ENCODE measurements at regions of chr12 and their contacts with region 1.

Region 1: GRCh38 chr12:123928274-123928865 is 44.3 kb downstream of the CCDC92 start:
- DNase-seq: no peak
- ATAC-seq: no peak
- H3K4me3 Mint-ChIP-seq: no peak overlapping the region
- H3K27ac Mint-ChIP-seq: no peak overlapping the region
- H3K4me1 Mint-ChIP-seq: peaks cover 13% of the 10 kb centered on the region
- H3K27me3 Mint-ChIP-seq: peaks cover 3% of the 10 kb centered on the region
- CTCF ChIP-seq: no peak

Region 2: GRCh38 chr12:123608182-123608581 is 320.2 kb before region 1 on chr12:
- CTCF ChIA-PET with region 1: no interaction called
- POLR2A ChIA-PET with region 1: no interaction called
- intact Hi-C with region 1: no loop called
- DNase-seq: no peak
- ATAC-seq: no peak
- H3K4me3 Mint-ChIP-seq: no peak overlapping the region
- H3K27ac Mint-ChIP-seq: no peak overlapping the region
- H3K4me1 Mint-ChIP-seq: peaks cover 20% of the 10 kb centered on the region
- H3K27me3 Mint-ChIP-seq: no peaks in the 10 kb centered on the region
- CTCF ChIP-seq: no peak

Region 3: DNA sequence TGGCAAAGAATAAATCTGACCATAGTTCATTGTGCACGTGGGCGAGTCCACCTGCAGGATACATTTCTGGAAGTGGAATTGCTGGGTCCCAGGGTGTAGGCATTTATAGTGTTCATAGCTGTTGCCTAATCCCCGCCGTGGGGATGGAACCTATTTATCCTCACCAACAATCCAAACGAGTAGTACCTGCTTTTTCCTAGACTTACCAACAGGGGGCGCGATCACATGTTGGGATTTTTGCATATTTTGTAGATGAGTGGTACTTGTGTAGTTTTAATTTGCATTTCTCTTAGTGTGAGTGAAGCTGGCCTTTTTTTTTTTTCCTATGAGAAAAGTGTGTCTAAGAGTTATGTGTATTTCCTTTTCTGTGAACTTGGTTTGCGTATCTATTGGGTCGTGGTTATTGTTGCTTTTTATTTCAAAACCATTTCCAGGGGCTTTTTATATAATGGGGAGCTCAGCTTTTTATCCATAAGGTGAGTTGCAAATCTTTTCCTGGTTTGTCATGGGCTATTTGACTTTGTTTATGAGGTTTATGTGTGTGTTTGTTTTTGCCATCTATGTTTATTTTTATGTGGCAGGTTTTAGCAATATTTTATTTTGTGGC is 22.9 kb before region 1 on chr12:
- CTCF ChIA-PET with region 1: interaction called, 10 read pairs
- POLR2A ChIA-PET with region 1: no interaction called
- intact Hi-C with region 1: no loop called
- DNase-seq: peak; percentile 76
- ATAC-seq: peak; percentile 63
- H3K4me3 Mint-ChIP-seq: no peak overlapping the region
- H3K27ac Mint-ChIP-seq: no peak overlapping the region
- H3K4me1 Mint-ChIP-seq: peaks cover 13% of the 10 kb centered on the region
- H3K27me3 Mint-ChIP-seq: peaks cover 2% of the 10 kb centered on the region
- CTCF ChIP-seq: peak; percentile 83

Region 4: DNA sequence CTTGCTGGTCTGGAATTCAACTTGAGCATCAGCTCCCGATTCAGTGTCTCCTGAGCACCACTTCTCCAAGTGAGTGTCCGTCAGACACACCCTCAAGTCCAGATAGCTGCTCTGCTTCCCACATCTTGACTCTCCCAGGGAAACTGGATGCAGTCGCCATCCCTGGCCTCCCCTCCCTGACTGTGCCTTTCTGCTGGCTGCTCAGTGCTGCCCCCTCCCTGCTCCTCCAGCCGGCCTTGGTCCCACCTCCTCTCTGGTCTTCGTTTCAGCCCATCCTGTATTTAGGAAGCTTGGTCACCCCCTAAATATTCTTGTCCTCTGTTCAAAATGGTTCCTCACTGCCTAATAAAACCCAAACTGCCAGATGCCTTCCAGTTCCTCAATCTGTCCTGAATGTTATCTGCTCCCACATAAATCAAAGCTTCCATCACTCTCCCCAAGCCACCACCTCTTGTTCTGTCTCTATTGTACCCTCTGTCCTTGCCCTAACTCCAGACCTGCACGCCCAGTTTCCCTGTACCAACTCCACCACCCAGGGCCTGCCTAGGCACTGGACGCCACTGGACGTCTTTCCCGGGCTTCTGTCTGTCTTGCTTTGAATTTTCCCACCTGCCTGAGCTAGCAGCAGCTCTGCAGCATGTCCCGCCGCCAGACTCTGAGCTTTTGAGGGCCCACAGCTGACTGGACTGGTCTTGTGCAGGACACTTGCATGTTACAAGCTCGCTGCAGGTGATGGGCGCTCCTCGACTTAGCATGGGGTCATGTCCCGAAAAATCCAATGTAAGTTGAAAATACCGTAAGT is 10.5 kb after region 1 on chr12:
- CTCF ChIA-PET with region 1: interaction called, 17 read pairs
- POLR2A ChIA-PET with region 1: interaction called, 7 read pairs
- intact Hi-C with region 1: no loop called
- DNase-seq: peak; percentile 37
- ATAC-seq: no peak
- H3K4me3 Mint-ChIP-seq: peak overlapping the region; percentile 61
- H3K27ac Mint-ChIP-seq: peak overlapping the region; percentile 88
- H3K4me1 Mint-ChIP-seq: peaks cover 25% of the 10 kb centered on the region
- H3K27me3 Mint-ChIP-seq: no peaks in the 10 kb centered on the region
- CTCF ChIP-seq: peak; percentile 37

Measured in activated CD8-positive, alpha-beta T cell treated with anti-CD3 and anti-CD28 coated beads for 36 hours (primary cell).